Activated naive CD4-positive, alpha-beta T cell treated with anti-CD3 and anti-CD28 coated beads, Interleukin-2, amount 10 ng/mL, durations not matched to agents 7 days and 5 days (primary cell): ENCODE measurements at regions of chr11 and their contacts with region 1.

Region 1: GRCh38 chr11:10540923-10541560 is at the start of gene RNF141:
- DNase-seq: peak; percentile 96
- H3K4me3 Mint-ChIP-seq: peak within 1 kb of the TSS; percentile 87
- H3K27ac Mint-ChIP-seq: peak within 1 kb of the TSS; percentile 71
- H3K4me1 Mint-ChIP-seq: peaks cover 16% of the 10 kb centered on the region
- H3K27me3 Mint-ChIP-seq: peaks cover 21% of the 10 kb centered on the region

Region 2: DNA sequence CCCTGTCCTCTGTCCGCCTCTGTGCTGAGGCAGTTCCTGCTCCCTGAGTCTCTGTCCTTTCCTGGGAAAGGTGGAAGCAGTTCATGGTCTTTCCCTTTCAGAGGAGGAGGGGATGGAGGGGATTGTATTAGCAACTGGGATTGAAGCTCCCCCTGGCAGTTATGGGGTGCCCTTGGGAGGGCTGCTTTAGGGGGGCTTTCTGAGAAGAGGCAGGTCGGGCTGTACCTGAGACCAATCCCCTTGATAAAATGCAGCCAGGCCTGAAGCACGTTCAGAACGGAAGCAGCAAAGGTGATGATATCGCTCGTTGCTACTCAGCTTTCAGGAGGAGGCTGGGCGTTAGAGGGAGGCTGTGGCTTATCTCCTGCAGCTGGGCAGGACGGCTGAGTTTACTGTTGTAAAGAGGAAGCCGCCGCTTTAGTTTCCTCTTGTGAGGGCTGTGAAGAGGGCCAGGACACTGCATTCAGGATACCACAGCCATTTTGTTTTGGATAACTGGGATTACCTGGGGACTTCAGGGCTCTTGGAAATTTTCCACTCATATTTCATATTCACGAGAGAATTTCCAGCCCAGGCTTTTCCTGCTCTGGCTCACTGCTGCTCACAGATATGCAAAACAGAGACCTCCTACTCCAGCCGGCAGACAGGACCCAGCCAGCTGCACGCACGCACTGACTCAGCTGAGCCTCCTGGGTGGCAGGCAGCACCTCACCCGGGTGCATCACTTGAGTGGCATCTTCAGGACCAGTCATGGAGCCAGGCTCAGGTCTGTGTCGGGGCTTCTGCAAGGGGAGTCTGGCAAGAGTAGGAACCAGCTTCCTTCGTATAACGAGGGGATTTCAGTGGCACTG is 85.2 kb before region 1 on chr11:
- CTCF ChIA-PET with region 1: interaction called, 14 read pairs
- DNase-seq: peak; percentile 87
- H3K4me3 Mint-ChIP-seq: peak overlapping the region; percentile 91
- H3K27ac Mint-ChIP-seq: peak overlapping the region; percentile 95
- H3K4me1 Mint-ChIP-seq: peaks cover 79% of the 10 kb centered on the region
- H3K27me3 Mint-ChIP-seq: peaks cover 16% of the 10 kb centered on the region

Region 3: GRCh38 chr11:10641177-10641911 is 100.3 kb after region 1 on chr11:
- CTCF ChIA-PET with region 1: no interaction called
- DNase-seq: no peak
- H3K4me3 Mint-ChIP-seq: no peak overlapping the region
- H3K27ac Mint-ChIP-seq: no peak overlapping the region
- H3K4me1 Mint-ChIP-seq: no peaks in the 10 kb centered on the region
- H3K27me3 Mint-ChIP-seq: peaks cover 21% of the 10 kb centered on the region

Region 4: GRCh38 chr11:10653926-10654810 is 113.1 kb after region 1 on chr11:
- CTCF ChIA-PET with region 1: interaction called, 18 read pairs
- DNase-seq: peak; percentile 49
- H3K4me3 Mint-ChIP-seq: no peak overlapping the region
- H3K27ac Mint-ChIP-seq: no peak overlapping the region
- H3K4me1 Mint-ChIP-seq: peaks cover 14% of the 10 kb centered on the region
- H3K27me3 Mint-ChIP-seq: peaks cover 4% of the 10 kb centered on the region